ENCODE measurements at regions of chr1 and their contacts with region 1.

Region 1: GRCh38 chr1:44036409-44037139 is 5.3 kb upstream of the SLC6A9 start:
- DNase-seq: no peak
- H3K4me3 ChIP-seq: no peak overlapping the region
- CTCF ChIP-seq: peak; percentile 78

Region 2: GRCh38 chr1:44012941-44013609 is 23.5 kb before region 1 on chr1:
- CTCF ChIA-PET with region 1: interaction called, 313 read pairs
- POLR2A ChIA-PET with region 1: interaction called, 5 read pairs
- DNase-seq: no peak
- H3K4me3 ChIP-seq: no peak overlapping the region
- CTCF ChIP-seq: no peak

Region 3: DNA sequence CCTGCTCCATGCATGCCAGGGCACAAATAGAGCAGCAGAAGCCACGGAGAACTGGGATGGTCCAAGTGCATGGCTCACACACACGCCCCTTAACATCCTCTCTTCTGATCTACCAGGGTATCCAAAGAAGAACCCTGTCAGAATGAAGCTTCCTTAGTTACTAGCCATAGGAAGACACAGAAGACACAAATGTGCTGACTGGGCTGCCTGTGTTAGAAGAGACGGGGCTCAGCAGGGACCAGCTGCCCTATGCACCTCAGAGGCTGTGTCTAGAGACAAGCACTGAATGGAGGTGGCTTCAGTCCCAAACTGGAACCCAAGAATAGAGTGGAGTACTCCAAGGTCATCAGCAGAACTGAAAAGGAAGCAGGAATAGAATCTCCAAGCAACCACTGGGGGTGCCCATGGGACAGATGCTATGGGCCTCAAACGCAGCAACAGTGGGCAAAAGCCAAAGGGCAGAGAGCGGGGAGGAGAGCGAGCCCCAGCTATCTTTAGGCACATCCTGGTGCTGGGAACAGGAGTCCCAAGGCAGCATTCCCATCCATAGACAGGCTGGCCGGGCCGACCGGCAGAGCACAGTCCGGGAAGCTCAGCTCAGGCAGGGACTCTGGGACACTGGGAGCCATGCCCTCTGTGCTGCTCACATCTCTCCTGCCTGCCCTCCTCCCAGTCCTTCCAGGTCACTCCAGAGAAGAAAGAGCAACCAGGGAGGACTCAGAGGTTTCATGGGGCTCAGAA is 14.8 kb before region 1 on chr1:
- CTCF ChIA-PET with region 1: interaction called, 14 read pairs
- POLR2A ChIA-PET with region 1: interaction called, 7 read pairs
- DNase-seq: no peak
- H3K4me3 ChIP-seq: no peak overlapping the region
- CTCF ChIP-seq: no peak

Region 4: DNA sequence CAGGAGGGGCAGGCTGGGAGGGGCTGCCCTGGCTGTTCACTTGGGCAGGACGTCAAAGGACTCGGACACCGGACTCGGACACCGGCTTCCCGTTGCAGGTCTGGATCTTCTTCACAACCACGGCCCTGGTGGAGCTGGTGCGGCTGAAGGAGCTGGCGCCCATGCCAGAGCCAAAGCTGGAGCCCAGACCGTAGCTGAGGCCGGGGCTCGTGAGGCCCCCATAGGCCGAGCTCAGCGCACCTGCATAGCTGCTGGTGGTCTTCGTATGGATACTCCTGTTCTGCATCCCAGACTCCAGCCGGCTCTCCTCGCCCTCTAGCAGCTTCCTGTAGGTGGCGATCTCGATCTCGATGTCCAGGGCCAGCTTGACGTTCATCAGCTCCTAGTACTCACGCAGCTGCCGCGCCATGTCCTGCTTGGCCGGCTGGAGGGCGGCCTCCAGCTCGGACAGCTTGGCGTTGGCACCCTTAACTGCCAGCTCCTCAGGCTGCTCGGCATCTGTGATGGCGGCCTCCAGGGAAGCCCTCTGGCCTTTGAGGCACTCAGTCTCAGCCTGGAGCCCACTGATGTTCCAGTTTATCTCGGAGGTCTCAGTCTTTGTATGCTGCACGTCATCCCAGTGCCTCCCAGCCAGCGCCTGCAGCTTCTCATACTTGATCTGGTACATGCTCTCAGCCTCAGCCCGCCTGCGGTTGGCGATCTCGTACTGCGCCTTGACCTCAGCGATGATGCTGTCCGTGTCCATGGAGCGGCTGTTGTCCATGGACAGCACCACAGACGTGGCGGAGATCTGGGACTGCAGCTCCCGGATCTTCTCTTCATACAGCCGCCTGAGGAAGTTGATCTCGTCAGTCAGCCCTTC is 66.9 kb after region 1 on chr1:
- CTCF ChIA-PET with region 1: no interaction called
- POLR2A ChIA-PET with region 1: no interaction called
- DNase-seq: no peak
- H3K4me3 ChIP-seq: no peak overlapping the region
- CTCF ChIP-seq: peak; percentile 27